Cardiac septum (tissue), 1 donor: ENCODE measurements at regions of chr6 and their contacts with region 1.

Region 1: GRCh38 chr6:32432050-32432450 is 7.6 kb upstream of the HLA-DRA start:
- DNase-seq: no peak

Region 2: GRCh38 chr6:32700391-32701040 is 268.5 kb after region 1 on chr6:
- intact Hi-C with region 1: loop called (anchors 5 kb)
- DNase-seq: no peak

Region 3: GRCh38 chr6:32785781-32786533 is 353.9 kb after region 1 on chr6:
- intact Hi-C with region 1: loop called (anchors 5 kb)
- DNase-seq: no peak